ENCODE measurements at regions of chr12 and their contacts with region 1.

Region 1: GRCh38 chr12:33180930-33181329 is 258.7 kb downstream of the SYT10 start:
- DNase-seq: peak; percentile 29
- H3K4me3 Mint-ChIP-seq: no peak overlapping the region
- H3K27ac Mint-ChIP-seq: no peak overlapping the region
- H3K4me1 Mint-ChIP-seq: peaks cover 27% of the 10 kb centered on the region
- H3K27me3 Mint-ChIP-seq: no peaks in the 10 kb centered on the region
- CTCF ChIP-seq: no peak

Region 2: GRCh38 chr12:32997471-32997870 is 183.5 kb before region 1 on chr12:
- CTCF ChIA-PET with region 1: no interaction called
- intact Hi-C with region 1: loop called (anchors 10 kb)
- DNase-seq: no peak
- H3K4me3 Mint-ChIP-seq: no peak overlapping the region
- H3K27ac Mint-ChIP-seq: peak overlapping the region; percentile 39
- H3K4me1 Mint-ChIP-seq: no peaks in the 10 kb centered on the region
- H3K27me3 Mint-ChIP-seq: no peaks in the 10 kb centered on the region
- CTCF ChIP-seq: no peak

Measured in Calu3 (cell line).